ENCODE measurements at regions of chrX and their contacts with region 1.

Region 1: GRCh38 chrX:101595739-101596419 is 21.9 kb downstream of the ARMCX6 start:
- DNase-seq: no peak
- H3K4me3 ChIP-seq: no peak overlapping the region
- H3K27ac ChIP-seq: no peak overlapping the region
- H3K4me1 ChIP-seq: no peaks in the 10 kb centered on the region
- H3K27me3 ChIP-seq: no peaks in the 10 kb centered on the region
- CTCF ChIP-seq: peak; percentile 44 to 56 (median 49)

Region 2: GRCh38 chrX:100350704-100351489 is 1245.0 kb before region 1 on chrX:
- intact Hi-C with region 1: no loop called
- DNase-seq: no peak
- H3K4me3 ChIP-seq: no peak overlapping the region
- H3K27ac ChIP-seq: no peak overlapping the region
- H3K4me1 ChIP-seq: no peaks in the 10 kb centered on the region
- H3K27me3 ChIP-seq: no peaks in the 10 kb centered on the region
- CTCF ChIP-seq: no peak

Region 3: GRCh38 chrX:101530944-101531343 is 64.9 kb before region 1 on chrX:
- intact Hi-C with region 1: no loop called
- DNase-seq: no peak
- H3K4me3 ChIP-seq: no peak overlapping the region
- H3K27ac ChIP-seq: no peak overlapping the region
- H3K4me1 ChIP-seq: no peaks in the 10 kb centered on the region
- H3K27me3 ChIP-seq: no peaks in the 10 kb centered on the region
- CTCF ChIP-seq: no peak

Region 4: DNA sequence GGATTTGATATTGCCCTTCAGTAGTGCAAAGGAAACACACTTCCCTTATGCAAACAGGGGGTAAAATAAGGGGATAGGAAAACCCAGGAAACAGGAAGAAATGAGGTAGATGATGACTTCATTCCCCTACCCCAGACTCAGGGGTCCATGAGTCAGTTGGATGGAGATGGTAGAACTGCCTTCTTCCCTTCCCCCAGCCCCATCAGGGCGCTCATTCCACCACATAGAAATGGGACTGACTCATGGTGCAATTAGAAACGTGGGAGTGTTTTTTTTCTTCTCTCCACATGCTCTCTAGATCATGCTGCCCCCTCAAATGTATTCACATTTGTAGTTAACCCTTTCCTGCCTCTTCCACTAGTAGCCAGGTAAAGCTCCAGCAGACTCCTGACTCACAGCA is 86.8 kb after region 1 on chrX:
- intact Hi-C with region 1: no loop called
- DNase-seq: no peak
- H3K4me3 ChIP-seq: no peak overlapping the region
- H3K27ac ChIP-seq: no peak overlapping the region
- H3K4me1 ChIP-seq: no peaks in the 10 kb centered on the region
- H3K27me3 ChIP-seq: no peaks in the 10 kb centered on the region
- CTCF ChIP-seq: no peak

Region 5: DNA sequence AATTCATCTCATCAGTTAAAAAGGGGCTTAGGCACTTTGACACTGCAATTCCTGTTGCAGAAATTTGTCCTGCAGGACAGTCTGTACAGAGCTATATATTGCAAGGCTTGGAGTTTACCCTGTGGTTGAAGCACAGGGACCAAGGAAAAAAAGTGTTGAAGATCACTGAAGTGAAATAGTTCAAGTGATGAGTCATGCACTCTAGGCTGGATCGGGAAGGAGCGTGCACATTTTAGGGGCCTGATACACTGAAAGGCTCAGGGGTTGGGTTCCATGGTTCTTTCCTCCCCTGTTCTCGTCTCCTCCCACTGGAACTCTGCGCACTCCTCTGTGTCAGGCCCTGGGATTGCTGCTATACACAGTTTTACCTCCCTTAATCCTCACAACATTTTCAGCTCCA is 168.7 kb after region 1 on chrX:
- intact Hi-C with region 1: loop called (anchors 5 kb)
- DNase-seq: no peak
- H3K4me3 ChIP-seq: no peak overlapping the region
- H3K27ac ChIP-seq: no peak overlapping the region
- H3K4me1 ChIP-seq: no peaks in the 10 kb centered on the region
- H3K27me3 ChIP-seq: no peaks in the 10 kb centered on the region
- CTCF ChIP-seq: no peak

Region 6: DNA sequence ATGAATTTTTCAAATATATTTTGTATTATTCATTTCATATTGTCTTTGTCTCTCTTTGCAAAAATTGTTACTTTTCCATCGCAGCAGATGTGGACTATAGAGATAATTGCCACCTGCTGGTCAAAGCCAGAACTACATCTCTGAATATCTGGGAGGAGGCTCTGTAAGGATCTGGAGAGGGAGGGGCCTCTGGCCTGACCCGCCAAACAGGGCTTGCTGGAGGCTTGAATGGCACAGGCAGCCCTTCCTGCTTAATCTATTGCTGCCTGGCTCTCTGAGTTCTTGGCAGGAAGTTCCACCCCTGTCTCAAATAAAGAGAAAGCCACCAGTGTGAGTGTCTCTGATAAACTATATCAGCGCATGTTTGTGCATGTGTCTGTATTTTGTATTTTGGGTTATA is 203.5 kb after region 1 on chrX:
- intact Hi-C with region 1: loop called (anchors 5 kb)
- DNase-seq: peak; percentile 54 to 91
- H3K4me3 ChIP-seq: no peak overlapping the region
- H3K27ac ChIP-seq: no peak overlapping the region
- H3K4me1 ChIP-seq: no peaks in the 10 kb centered on the region
- H3K27me3 ChIP-seq: no peaks in the 10 kb centered on the region
- CTCF ChIP-seq: peak; percentile 51 to 75 (median 71)

Measured in ascending aorta (tissue), 2 donors.